ENCODE measurements at regions of chr1 and their contacts with region 1.

Region 1: GRCh38 chr1:89865498-89866385 is 44.9 kb downstream of the LRRC8D start:
- DNase-seq: peak; percentile 78
- H3K4me3 ChIP-seq: no peak overlapping the region
- H3K27ac ChIP-seq: peak overlapping the region; percentile 34
- H3K4me1 ChIP-seq: peaks cover 21% of the 10 kb centered on the region
- H3K27me3 ChIP-seq: no peaks in the 10 kb centered on the region
- CTCF ChIP-seq: no peak
- POLR2A ChIP-seq: no peak

Region 2: DNA sequence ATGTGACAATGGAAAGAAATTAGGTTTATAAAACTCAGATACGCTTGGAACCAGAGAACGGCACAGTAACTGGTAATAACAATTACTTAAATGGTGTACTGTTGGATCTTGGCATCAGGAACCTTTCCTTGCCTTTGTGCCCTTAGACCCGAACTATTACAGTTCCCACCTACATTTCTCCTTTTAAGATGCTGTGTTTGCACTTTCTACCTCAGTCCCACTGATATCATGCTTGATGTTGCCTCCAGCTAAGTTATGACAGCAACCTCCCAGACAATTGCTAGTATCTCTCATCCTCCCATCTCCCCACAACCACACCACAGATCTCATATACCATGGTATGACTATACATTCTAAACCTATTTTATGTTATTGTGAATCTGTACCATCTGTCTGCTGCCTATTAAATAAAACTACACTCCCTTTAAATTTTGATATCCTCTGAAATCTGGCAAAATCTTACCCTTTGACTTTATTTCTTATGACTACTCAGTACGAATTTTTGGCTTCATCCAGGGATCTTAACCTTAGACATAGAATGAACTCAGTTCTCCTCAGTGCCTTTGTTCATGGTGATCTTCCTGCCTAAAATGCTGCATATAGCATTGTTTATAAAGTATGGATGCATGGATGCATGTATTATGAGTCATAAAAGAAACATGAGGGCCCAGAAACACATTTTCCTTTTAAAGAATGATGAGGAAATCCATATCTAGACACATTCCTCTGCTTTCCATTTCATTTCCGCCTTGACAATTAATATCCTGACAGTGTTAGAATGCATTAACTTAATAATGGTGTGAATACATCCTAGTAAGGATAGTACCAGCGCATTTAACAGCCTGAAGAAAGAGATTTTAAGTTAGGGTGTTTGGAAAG is 19.2 kb after region 1 on chr1:
- CTCF ChIA-PET with region 1: interaction called, 3 read pairs
- POLR2A ChIA-PET with region 1: no interaction called
- dilution Hi-C with region 1: no loop called
- intact Hi-C with region 1: loop called (anchors 2 kb)
- DNase-seq: peak; percentile 87
- H3K4me3 ChIP-seq: peak overlapping the region in 1 of 3 experiments; percentile 23
- H3K27ac ChIP-seq: peak overlapping the region; percentile 80
- H3K4me1 ChIP-seq: peaks cover 48% of the 10 kb centered on the region
- H3K27me3 ChIP-seq: no peaks in the 10 kb centered on the region
- CTCF ChIP-seq: no peak
- POLR2A ChIP-seq: no peak

Region 3: GRCh38 chr1:90155721-90156487 is 290.2 kb after region 1 on chr1:
- CTCF ChIA-PET with region 1: no interaction called
- POLR2A ChIA-PET with region 1: no interaction called
- dilution Hi-C with region 1: no loop called
- intact Hi-C with region 1: no loop called
- DNase-seq: no peak
- H3K4me3 ChIP-seq: no peak overlapping the region
- H3K27ac ChIP-seq: no peak overlapping the region
- H3K4me1 ChIP-seq: no peaks in the 10 kb centered on the region
- H3K27me3 ChIP-seq: no peaks in the 10 kb centered on the region
- CTCF ChIP-seq: no peak
- POLR2A ChIP-seq: no peak